Common myeloid progenitor, CD34-positive (primary cell): ENCODE measurements at regions of chr5 and their contacts with region 1.

Region 1: GRCh38 chr5:127326428-127326827 is 35.8 kb downstream of the MEGF10 start:
- DNase-seq: no peak
- H3K4me3 ChIP-seq: no peak overlapping the region
- H3K27ac ChIP-seq: no peak overlapping the region
- H3K4me1 ChIP-seq: peaks cover 0 to under 1% (median 0%) of the 10 kb centered on the region in 4 experiments
- H3K27me3 ChIP-seq: peaks cover 0 to 2% (median 0%) of the 10 kb centered on the region in 5 experiments

Region 2: GRCh38 chr5:127313847-127314473 is 12.5 kb before region 1 on chr5:
- CTCF ChIA-PET with region 1: interaction called, 14 read pairs
- POLR2A ChIA-PET with region 1: no interaction called
- DNase-seq: peak; percentile 43 to 71 (median 59)
- H3K4me3 ChIP-seq: no peak overlapping the region
- H3K27ac ChIP-seq: no peak overlapping the region
- H3K4me1 ChIP-seq: no peaks in the 10 kb centered on the region
- H3K27me3 ChIP-seq: peaks cover 0 to 1% (median 0%) of the 10 kb centered on the region in 5 experiments

Region 3: DNA sequence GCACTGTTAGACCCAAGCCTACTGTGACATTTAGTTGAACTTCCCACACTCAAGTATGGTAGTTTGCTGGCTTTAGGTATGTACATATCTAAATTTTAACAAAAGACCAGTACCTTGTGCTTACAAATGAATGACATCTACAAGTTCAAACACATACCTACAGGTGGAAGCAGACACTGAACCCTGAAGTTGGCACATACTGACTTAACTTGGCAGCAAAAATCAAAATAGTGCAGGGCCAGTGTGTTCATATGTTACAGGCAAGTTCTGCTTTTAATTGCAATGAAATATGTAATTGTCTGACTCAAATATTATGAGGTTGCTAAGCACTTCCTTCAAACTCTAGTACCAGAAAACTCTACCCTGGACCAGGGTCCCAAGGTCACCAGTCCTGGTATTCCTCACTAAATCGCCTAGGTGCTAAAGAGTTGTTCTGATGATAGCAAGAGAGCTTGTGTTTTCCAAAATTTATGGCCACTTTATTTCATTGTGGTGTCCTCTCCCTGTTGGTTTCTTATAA is 41.6 kb after region 1 on chr5:
- CTCF ChIA-PET with region 1: no interaction called
- POLR2A ChIA-PET with region 1: no interaction called
- DNase-seq: peak in 2 of 3 donors; percentile 33 to 62
- H3K4me3 ChIP-seq: no peak overlapping the region
- H3K27ac ChIP-seq: no peak overlapping the region
- H3K4me1 ChIP-seq: no peaks in the 10 kb centered on the region
- H3K27me3 ChIP-seq: no peaks in the 10 kb centered on the region